ENCODE measurements at regions of chr4 and their contacts with region 1.

Region 1: DNA sequence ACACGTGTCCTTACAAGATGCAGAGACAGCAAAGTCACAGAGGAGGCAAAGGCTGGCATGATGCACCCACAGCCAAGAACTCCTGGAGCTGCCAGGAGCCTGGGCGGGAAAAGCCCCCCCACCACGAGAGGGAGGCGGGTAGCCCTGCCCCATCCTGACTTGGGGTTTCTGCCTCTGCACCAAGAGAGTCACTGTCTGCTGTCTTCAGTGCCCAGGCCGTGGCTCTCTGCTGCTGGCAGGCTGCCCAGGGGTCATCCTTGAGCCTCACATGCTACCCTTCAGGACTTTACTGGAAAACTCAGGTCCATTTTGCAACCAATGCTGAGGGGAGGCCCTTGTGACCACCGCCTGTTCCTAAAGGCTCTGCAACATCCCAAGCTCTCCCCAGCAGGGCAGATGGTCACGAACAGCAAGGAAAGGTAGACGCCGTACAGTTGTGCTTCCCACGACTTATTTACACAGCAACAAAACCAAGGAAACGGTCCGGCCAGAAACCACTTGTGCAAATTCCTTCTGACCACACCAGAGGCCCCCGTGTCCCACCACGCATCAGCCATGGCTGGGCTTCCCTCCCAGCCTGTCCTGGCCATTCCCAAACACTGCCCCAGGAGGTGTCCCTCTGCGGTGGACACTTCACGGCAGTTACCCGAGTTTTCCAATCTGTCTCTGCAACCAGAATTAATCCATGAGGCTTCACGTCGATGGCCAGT is 56.9 kb downstream of the ACOX3 start:
- DNase-seq: peak; percentile 42
- ATAC-seq: no peak; the same call in 1 of the 2 replicates
- H3K4me3 ChIP-seq: no peak overlapping the region
- H3K27ac ChIP-seq: no peak overlapping the region
- H3K4me1 ChIP-seq: peaks cover 2% of the 10 kb centered on the region; the same call in 1 of the 2 replicates
- H3K27me3 ChIP-seq: no peaks in the 10 kb centered on the region
- CTCF ChIP-seq: no peak
- POLR2A ChIP-seq: no peak
- RAD21 ChIP-seq: no peak

Region 2: GRCh38 chr4:8370935-8371595 is 12.5 kb before region 1 on chr4:
- CTCF ChIA-PET with region 1: no interaction called
- POLR2A ChIA-PET with region 1: no interaction called
- dilution Hi-C with region 1: no loop called
- in situ Hi-C with region 1: no loop called
- intact Hi-C with region 1: loop called (anchors 1 kb)
- DNase-seq: no peak
- ATAC-seq: no peak
- H3K4me3 ChIP-seq: no peak overlapping the region
- H3K27ac ChIP-seq: no peak overlapping the region
- H3K4me1 ChIP-seq: no peaks in the 10 kb centered on the region
- H3K27me3 ChIP-seq: no peaks in the 10 kb centered on the region
- CTCF ChIP-seq: no peak
- POLR2A ChIP-seq: no peak
- RAD21 ChIP-seq: no peak

Measured in IMR-90 (cell line).